ENCODE measurements at regions of chr6 and their contacts with region 1.

Region 1: GRCh38 chr6:20056350-20056992 is 155.8 kb downstream of the MBOAT1 start:
- DNase-seq: peak in 1 of 2 donors; percentile 35
- ATAC-seq: no peak
- H3K4me3 ChIP-seq: no peak overlapping the region
- H3K4me3 Mint-ChIP-seq: no peak overlapping the region
- H3K27ac ChIP-seq: no peak overlapping the region
- H3K27ac Mint-ChIP-seq: no peak overlapping the region
- H3K4me1 ChIP-seq: no peaks in the 10 kb centered on the region
- H3K4me1 Mint-ChIP-seq: peaks cover 0 to 9% of the 10 kb centered on the region in 2 donors
- H3K27me3 ChIP-seq: no peaks in the 10 kb centered on the region
- H3K27me3 Mint-ChIP-seq: peaks cover 0 to 2% of the 10 kb centered on the region in 2 donors
- CTCF ChIP-seq: peak; percentile 54

Region 2: GRCh38 chr6:18323935-18324705 is 1732.4 kb before region 1 on chr6:
- intact Hi-C with region 1: loop called (anchors 10 kb)
- DNase-seq: peak in 1 of 2 donors; percentile 66
- ATAC-seq: peak in 2 of 3 donors; percentile 68 to 76
- H3K4me3 ChIP-seq: no peak overlapping the region
- H3K4me3 Mint-ChIP-seq: no peak overlapping the region
- H3K27ac ChIP-seq: no peak overlapping the region
- H3K27ac Mint-ChIP-seq: no peak overlapping the region
- H3K4me1 ChIP-seq: no peaks in the 10 kb centered on the region
- H3K4me1 Mint-ChIP-seq: no peaks in the 10 kb centered on the region
- H3K27me3 ChIP-seq: no peaks in the 10 kb centered on the region
- H3K27me3 Mint-ChIP-seq: peaks cover 0 to 8% of the 10 kb centered on the region in 2 donors
- CTCF ChIP-seq: peak; percentile 90

Region 3: DNA sequence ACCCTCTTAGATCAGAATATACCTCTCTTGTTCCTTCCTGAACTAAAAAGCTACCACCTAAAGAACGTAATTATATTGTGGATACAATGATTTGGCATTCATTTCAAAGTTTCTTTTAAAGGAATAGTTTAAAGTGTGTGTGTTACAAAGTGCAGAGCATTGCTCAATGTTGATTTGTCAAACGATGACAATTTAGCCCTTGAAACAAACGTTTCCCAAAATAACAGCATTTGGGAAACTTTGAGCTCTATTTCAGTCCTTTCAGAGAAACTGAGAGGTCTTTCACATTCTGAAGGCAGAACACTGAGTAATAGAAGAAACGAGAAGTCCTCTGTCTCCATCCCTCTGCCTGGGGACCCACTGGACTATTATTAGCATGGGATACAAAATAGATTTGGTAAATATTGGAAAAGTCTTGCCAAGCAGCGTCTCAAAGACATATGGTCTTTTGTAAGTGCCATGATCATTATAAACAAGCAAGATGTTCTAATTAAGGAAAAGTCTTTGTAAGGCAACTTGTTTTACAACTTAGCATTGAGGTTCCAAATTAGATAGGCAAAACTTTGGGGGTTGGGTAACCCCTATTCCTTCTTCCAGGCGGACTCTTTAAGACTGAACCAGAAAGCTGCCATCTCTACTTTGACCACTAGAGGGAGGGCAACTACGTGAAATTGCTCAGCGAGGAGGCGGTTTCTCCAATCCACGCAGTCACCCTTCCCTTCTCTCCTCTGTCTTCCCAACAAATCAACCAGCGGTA is 1460.5 kb before region 1 on chr6:
- intact Hi-C with region 1: loop called (anchors 1 kb)
- DNase-seq: peak in 1 of 2 donors; percentile 63
- ATAC-seq: peak in 2 of 3 donors; percentile 71 to 77
- H3K4me3 ChIP-seq: no peak overlapping the region
- H3K4me3 Mint-ChIP-seq: no peak overlapping the region
- H3K27ac ChIP-seq: no peak overlapping the region
- H3K27ac Mint-ChIP-seq: no peak overlapping the region
- H3K4me1 ChIP-seq: no peaks in the 10 kb centered on the region
- H3K4me1 Mint-ChIP-seq: peaks cover 5 to 7% of the 10 kb centered on the region in 2 donors
- H3K27me3 ChIP-seq: no peaks in the 10 kb centered on the region
- H3K27me3 Mint-ChIP-seq: peaks cover 0 to 15% of the 10 kb centered on the region in 2 donors
- CTCF ChIP-seq: peak; percentile 85